ENCODE measurements at regions of chr10 and their contacts with region 1.

Region 1: DNA sequence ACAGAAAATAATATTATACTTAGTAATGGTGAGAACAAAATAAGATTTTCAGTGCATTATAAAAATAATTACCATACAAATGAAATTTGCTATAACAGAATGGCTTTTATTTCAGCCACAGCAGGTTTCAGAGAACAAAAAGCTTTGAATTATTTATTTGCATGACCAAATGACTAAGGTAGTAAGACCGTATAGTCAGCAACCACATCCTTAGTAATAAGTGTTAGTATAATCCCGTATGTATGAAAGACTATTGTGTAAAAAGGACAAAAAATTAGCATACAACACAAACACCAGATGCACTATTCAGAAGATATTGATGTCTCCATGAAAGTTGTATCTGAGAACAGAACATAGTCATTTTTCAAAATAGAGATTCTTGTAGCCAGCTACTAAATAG is 12.2 kb downstream of the PDZD8 start:
- DNase-seq: no peak
- H3K4me3 ChIP-seq: no peak overlapping the region
- H3K27ac ChIP-seq: no peak overlapping the region
- H3K4me1 ChIP-seq: no peaks in the 10 kb centered on the region
- H3K27me3 ChIP-seq: no peaks in the 10 kb centered on the region
- CTCF ChIP-seq: no peak
- POLR2A ChIP-seq: no peak

Region 2: DNA sequence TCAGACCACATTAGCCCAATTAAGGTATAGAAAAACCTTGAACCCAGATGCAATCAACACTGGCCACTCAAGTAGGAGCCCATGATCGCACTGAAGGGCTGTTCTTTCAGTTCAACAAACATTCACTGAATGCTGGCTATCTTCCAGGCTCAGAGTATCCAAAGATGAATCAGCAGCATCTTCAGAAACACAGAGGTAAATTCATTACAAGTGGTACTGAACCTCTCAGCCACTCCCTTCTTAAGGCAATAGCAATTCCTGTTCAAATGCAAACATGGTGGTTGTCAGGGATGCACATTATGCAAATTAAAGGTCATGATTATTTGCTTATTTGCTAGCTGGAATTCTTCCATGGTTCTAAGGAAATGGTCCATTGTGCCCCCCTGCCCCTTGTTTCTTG is 148.6 kb before region 1 on chr10:
- intact Hi-C with region 1: no loop called
- DNase-seq: no peak
- H3K4me3 ChIP-seq: no peak overlapping the region
- H3K27ac ChIP-seq: no peak overlapping the region
- H3K4me1 ChIP-seq: peaks cover 3 to 10% of the 10 kb centered on the region in 2 donors
- H3K27me3 ChIP-seq: peaks cover 0 to 13% of the 10 kb centered on the region in 2 donors
- CTCF ChIP-seq: no peak
- POLR2A ChIP-seq: no peak

Region 3: DNA sequence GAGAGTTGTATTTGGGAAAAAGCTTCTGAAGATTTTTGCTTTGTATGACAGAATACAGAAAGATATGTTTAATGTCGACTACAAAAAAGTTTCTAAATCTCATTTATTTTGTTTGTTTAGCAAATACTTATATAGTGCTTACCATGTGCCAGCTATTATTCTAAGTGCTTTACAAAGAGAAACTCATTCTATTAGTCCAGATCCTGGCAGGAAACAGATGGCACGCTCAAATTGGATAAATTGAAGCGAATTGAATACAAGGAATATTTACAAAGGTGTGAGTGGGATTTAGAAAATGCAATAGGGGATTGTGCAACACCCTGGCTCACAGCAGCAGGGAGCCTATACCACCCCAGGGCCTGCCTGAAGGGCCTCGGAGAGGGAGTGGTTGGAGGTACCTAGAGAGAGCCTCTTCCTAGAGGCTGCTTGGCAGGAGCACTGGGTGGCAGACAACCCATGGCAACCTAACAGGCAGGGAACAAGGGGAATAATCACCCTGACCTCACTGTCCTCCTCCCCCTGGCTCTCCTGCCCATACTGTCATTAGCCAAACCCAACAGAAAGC is 1006.7 kb after region 1 on chr10:
- intact Hi-C with region 1: loop called (anchors 5 kb)
- DNase-seq: no peak
- H3K4me3 ChIP-seq: no peak overlapping the region
- H3K27ac ChIP-seq: no peak overlapping the region
- H3K4me1 ChIP-seq: no peaks in the 10 kb centered on the region
- H3K27me3 ChIP-seq: no peaks in the 10 kb centered on the region
- CTCF ChIP-seq: no peak
- POLR2A ChIP-seq: no peak

Measured in breast epithelium (tissue), 4 donors.